B cell (primary cell): ENCODE measurements at regions of chr18 and their contacts with region 1.

Region 1: GRCh38 chr18:35040988-35041814 is at the start of gene MAPRE2:
- DNase-seq: peak; percentile 100
- ATAC-seq: peak; percentile 85
- H3K4me3 ChIP-seq: peak within 1 kb of the TSS; percentile 93 to 99 (median 97)
- H3K4me3 Mint-ChIP-seq: peak within 1 kb of the TSS; percentile 95
- H3K27ac ChIP-seq: peak within 1 kb of the TSS; percentile 95 to 96
- H3K27ac Mint-ChIP-seq: peak within 1 kb of the TSS; percentile 96
- H3K4me1 ChIP-seq: peaks cover 73 to 77% of the 10 kb centered on the region in 2 donors
- H3K4me1 Mint-ChIP-seq: peaks cover 83% of the 10 kb centered on the region
- H3K27me3 ChIP-seq: no peaks in the 10 kb centered on the region
- H3K27me3 Mint-ChIP-seq: no peaks in the 10 kb centered on the region
- CTCF ChIP-seq: peak; percentile 18
- total RNA-seq, gene MAPRE2: 62.6 and 63.3 TPM in 2 replicates

Region 2: DNA sequence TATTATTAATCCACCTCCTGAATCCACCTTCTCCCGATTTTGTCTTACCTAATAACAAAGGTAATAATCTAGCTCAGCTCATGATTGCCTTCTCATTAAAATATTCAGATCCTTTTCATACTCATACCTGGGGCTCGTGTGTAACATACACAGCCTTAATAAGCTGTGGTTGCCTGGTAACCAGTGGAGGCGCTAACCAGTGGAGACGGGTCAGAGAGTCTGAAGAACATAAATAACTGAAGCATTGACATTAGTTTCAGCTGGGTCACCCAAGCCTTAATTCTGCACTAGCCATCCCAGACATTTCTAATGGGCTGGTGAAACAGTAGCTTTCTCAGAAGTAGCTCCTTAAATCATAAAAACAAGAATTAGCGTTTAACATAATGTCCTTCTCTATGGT is 345.9 kb before region 1 on chr18:
- CTCF ChIA-PET with region 1: no interaction called
- POLR2A ChIA-PET with region 1: no interaction called
- intact Hi-C with region 1: no loop called
- DNase-seq: no peak
- ATAC-seq: no peak
- H3K4me3 ChIP-seq: no peak overlapping the region
- H3K4me3 Mint-ChIP-seq: no peak overlapping the region
- H3K27ac ChIP-seq: no peak overlapping the region
- H3K27ac Mint-ChIP-seq: no peak overlapping the region
- H3K4me1 ChIP-seq: no peaks in the 10 kb centered on the region
- H3K4me1 Mint-ChIP-seq: no peaks in the 10 kb centered on the region
- H3K27me3 ChIP-seq: no peaks in the 10 kb centered on the region
- H3K27me3 Mint-ChIP-seq: no peaks in the 10 kb centered on the region
- CTCF ChIP-seq: no peak

Region 3: DNA sequence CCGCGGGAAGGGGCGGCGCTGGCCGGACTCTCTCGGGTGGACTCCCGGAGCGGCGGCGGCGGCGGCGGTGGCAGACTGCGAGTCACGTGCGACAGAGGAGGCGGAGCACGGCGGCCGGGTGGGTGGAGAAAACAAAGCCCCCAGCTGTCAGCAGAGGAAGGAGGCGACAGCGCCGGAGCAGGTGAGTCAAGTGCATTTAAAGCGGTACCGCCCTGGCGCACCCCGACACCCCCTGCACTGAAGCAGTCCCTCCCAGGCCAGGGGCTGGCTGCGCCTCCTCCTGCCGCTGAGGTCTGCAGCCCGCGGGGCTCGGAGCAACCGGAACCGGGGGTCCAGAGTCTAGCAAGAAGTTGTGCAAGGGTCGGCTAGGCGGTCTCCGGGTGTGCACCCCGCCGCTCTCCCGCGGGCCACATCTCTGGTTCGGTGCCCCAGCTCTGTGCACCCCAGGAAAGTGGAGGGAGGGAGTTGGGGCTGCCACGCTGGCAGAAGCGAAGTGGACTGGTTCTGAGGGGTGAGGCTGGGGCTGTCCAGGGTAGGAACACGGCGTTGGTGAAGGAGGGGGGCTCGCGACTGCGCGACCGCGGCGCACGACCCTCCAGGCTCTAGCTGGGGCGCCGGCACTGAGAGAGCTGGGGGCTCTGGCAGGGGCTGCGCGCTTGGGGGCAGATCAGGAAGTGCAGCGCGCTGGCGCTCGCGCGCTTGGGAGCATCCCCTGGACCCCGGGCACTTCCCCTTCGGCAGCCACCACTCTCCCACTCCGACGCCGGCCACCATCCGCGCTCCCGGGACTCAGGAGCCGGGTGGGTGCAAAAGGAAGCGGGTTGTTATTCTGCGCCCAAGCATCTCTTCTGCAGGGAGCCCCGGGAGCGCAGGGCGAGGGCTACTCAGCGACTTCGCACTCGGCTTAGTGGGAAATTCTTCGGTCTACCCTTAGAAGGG is 64.0 kb before region 1 on chr18:
- CTCF ChIA-PET with region 1: interaction called, 3 read pairs
- POLR2A ChIA-PET with region 1: no interaction called
- intact Hi-C with region 1: loop called (anchors 5 kb)
- DNase-seq: peak; percentile 83
- ATAC-seq: peak; percentile 79
- H3K4me3 ChIP-seq: peak overlapping the region; percentile 81 to 96 (median 89)
- H3K4me3 Mint-ChIP-seq: peak overlapping the region; percentile 92
- H3K27ac ChIP-seq: peak overlapping the region in 1 of 2 donors; percentile 16
- H3K27ac Mint-ChIP-seq: no peak overlapping the region
- H3K4me1 ChIP-seq: peaks cover 17 to 26% of the 10 kb centered on the region in 2 donors
- H3K4me1 Mint-ChIP-seq: peaks cover 26% of the 10 kb centered on the region
- H3K27me3 ChIP-seq: peaks cover 0 to 20% (median 11%) of the 10 kb centered on the region in 4 experiments
- H3K27me3 Mint-ChIP-seq: peaks cover 26% of the 10 kb centered on the region
- CTCF ChIP-seq: no peak

Region 4: GRCh38 chr18:35029770-35030169 is 11.4 kb before region 1 on chr18:
- CTCF ChIA-PET with region 1: interaction called, 130 read pairs
- POLR2A ChIA-PET with region 1: interaction called, 18 read pairs
- intact Hi-C with region 1: loop called (anchors 1 kb)
- DNase-seq: peak; percentile 63
- ATAC-seq: peak; percentile 78
- H3K4me3 ChIP-seq: peak overlapping the region; percentile 44 to 80 (median 61)
- H3K4me3 Mint-ChIP-seq: peak overlapping the region; percentile 85
- H3K27ac ChIP-seq: peak overlapping the region; percentile 90 to 93
- H3K27ac Mint-ChIP-seq: peak overlapping the region; percentile 93
- H3K4me1 ChIP-seq: peaks cover 29 to 34% of the 10 kb centered on the region in 2 donors
- H3K4me1 Mint-ChIP-seq: peaks cover 44% of the 10 kb centered on the region
- H3K27me3 ChIP-seq: no peaks in the 10 kb centered on the region
- H3K27me3 Mint-ChIP-seq: no peaks in the 10 kb centered on the region
- CTCF ChIP-seq: peak; percentile 44

Region 5: GRCh38 chr18:35143622-35144596 is 102.7 kb after region 1 on chr18:
- CTCF ChIA-PET with region 1: interaction called, 12 read pairs
- POLR2A ChIA-PET with region 1: no interaction called
- intact Hi-C with region 1: no loop called
- DNase-seq: peak; percentile 52
- ATAC-seq: peak; percentile 67
- H3K4me3 ChIP-seq: no peak overlapping the region
- H3K4me3 Mint-ChIP-seq: no peak overlapping the region
- H3K27ac ChIP-seq: peak overlapping the region in 1 of 2 donors; percentile 31
- H3K27ac Mint-ChIP-seq: peak overlapping the region; percentile 6
- H3K4me1 ChIP-seq: peaks cover 24 to 28% of the 10 kb centered on the region in 2 donors
- H3K4me1 Mint-ChIP-seq: peaks cover 39% of the 10 kb centered on the region
- H3K27me3 ChIP-seq: no peaks in the 10 kb centered on the region
- H3K27me3 Mint-ChIP-seq: no peaks in the 10 kb centered on the region
- CTCF ChIP-seq: peak; percentile 55

Region 6: GRCh38 chr18:35240664-35241447 is 199.7 kb after region 1 on chr18 and contains the start of gene ZNF397:
- CTCF ChIA-PET with region 1: no interaction called
- POLR2A ChIA-PET with region 1: no interaction called
- intact Hi-C with region 1: loop called (anchors 2 kb)
- DNase-seq: peak; percentile 97
- ATAC-seq: peak; percentile 98
- H3K4me3 ChIP-seq: peak within 1 kb of the TSS; percentile 79 to 95 (median 91)
- H3K4me3 Mint-ChIP-seq: peak within 1 kb of the TSS; percentile 91
- H3K27ac ChIP-seq: peak within 1 kb of the TSS; percentile 97
- H3K27ac Mint-ChIP-seq: peak within 1 kb of the TSS; percentile 99
- H3K4me1 ChIP-seq: peaks cover 10 to 12% of the 10 kb centered on the region in 2 donors
- H3K4me1 Mint-ChIP-seq: peaks cover 29% of the 10 kb centered on the region
- H3K27me3 ChIP-seq: no peaks in the 10 kb centered on the region
- H3K27me3 Mint-ChIP-seq: no peaks in the 10 kb centered on the region
- CTCF ChIP-seq: no peak
- total RNA-seq, gene ZNF397: 63.0 and 67.2 TPM in 2 replicates

Region 7: DNA sequence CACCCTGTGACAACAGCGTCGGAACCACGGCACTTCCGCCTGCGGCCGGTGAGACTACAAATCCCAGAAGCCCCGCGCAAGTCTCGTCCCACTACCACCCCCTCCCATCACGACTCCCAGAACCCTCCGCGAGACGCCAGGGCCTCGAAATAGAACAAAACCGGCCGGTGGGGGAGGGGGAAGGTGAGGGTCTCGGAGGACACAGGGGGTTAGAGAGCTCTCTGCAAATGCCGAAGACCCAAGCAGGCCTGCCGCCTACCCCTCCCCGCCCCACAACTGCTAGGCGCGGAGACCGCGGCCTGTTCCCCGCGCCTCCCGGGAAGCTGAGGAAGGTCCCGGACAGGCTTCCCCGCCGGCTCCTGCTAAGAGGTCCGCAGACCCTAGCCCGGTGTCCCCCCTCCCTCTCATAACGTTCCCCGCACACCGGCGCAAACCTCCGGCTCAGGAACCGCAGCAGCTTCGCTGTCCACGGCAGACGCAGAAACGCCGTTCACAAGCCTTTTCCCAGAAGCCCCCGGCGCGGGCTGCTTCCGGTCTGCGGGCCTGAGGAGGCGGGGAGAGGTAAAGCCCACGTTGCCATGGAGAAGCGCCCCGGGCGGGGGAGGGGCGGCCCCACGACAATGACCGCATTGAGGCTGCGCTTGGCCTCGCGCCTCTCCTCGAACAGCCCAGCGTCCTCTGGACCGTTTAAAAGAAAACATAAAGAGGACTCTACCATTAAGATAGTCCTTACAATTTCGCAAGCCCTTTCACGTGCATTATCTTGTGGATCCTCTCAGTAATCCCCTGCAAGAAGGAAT is 302.9 kb after region 1 on chr18 and contains the start of gene ZNF24:
- CTCF ChIA-PET with region 1: interaction called, 7 read pairs
- POLR2A ChIA-PET with region 1: interaction called, 7 read pairs
- intact Hi-C with region 1: loop called (anchors 1 kb)
- DNase-seq: peak; percentile 96
- ATAC-seq: peak; percentile 84
- H3K4me3 ChIP-seq: peak within 1 kb of the TSS; percentile 84 to 99 (median 97)
- H3K4me3 Mint-ChIP-seq: peak within 1 kb of the TSS; percentile 100
- H3K27ac ChIP-seq: peak within 1 kb of the TSS; percentile 99
- H3K27ac Mint-ChIP-seq: peak within 1 kb of the TSS; percentile 99
- H3K4me1 ChIP-seq: peaks cover 24 to 35% of the 10 kb centered on the region in 2 donors
- H3K4me1 Mint-ChIP-seq: peaks cover 64% of the 10 kb centered on the region
- H3K27me3 ChIP-seq: no peaks in the 10 kb centered on the region
- H3K27me3 Mint-ChIP-seq: no peaks in the 10 kb centered on the region
- CTCF ChIP-seq: no peak
- total RNA-seq, gene ZNF24: 80.1 and 83.7 TPM in 2 replicates

Region 8: DNA sequence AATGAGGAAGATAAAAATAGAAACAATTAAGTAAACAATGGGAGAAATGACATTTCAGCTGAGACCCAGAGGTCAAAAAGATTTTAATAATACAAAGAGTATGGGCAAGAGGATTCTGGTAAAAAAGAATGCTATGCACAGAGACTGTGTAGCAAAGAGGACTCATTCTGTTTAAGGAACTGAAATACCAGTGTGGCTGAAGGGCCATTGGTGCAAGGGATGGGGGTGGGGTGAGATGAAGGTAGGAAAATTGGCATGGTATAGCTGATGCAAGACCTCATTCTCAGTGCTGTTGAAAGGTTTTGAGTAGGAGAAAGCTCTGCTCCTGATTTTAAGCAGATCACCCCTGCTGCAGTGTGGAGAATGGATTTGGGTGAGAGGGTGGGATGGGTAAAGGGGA is 551.1 kb after region 1 on chr18:
- CTCF ChIA-PET with region 1: no interaction called
- POLR2A ChIA-PET with region 1: no interaction called
- intact Hi-C with region 1: loop called (anchors 5 kb)
- DNase-seq: peak; percentile 65
- ATAC-seq: peak; percentile 97
- H3K4me3 ChIP-seq: no peak overlapping the region
- H3K4me3 Mint-ChIP-seq: no peak overlapping the region
- H3K27ac ChIP-seq: peak overlapping the region in 1 of 2 donors; percentile 47
- H3K27ac Mint-ChIP-seq: no peak overlapping the region
- H3K4me1 ChIP-seq: peaks cover 54 to 55% of the 10 kb centered on the region in 2 donors
- H3K4me1 Mint-ChIP-seq: peaks cover 40% of the 10 kb centered on the region
- H3K27me3 ChIP-seq: no peaks in the 10 kb centered on the region
- H3K27me3 Mint-ChIP-seq: no peaks in the 10 kb centered on the region
- CTCF ChIP-seq: no peak